Activated CD4-positive, alpha-beta T cell treated with anti-CD3 and anti-CD28 coated beads, Interleukin-2, amount 10 ng/mL, durations not matched to agents 24 days and 14 days (primary cell): ENCODE measurements at regions of chr20 and their contacts with region 1.

Region 1: DNA sequence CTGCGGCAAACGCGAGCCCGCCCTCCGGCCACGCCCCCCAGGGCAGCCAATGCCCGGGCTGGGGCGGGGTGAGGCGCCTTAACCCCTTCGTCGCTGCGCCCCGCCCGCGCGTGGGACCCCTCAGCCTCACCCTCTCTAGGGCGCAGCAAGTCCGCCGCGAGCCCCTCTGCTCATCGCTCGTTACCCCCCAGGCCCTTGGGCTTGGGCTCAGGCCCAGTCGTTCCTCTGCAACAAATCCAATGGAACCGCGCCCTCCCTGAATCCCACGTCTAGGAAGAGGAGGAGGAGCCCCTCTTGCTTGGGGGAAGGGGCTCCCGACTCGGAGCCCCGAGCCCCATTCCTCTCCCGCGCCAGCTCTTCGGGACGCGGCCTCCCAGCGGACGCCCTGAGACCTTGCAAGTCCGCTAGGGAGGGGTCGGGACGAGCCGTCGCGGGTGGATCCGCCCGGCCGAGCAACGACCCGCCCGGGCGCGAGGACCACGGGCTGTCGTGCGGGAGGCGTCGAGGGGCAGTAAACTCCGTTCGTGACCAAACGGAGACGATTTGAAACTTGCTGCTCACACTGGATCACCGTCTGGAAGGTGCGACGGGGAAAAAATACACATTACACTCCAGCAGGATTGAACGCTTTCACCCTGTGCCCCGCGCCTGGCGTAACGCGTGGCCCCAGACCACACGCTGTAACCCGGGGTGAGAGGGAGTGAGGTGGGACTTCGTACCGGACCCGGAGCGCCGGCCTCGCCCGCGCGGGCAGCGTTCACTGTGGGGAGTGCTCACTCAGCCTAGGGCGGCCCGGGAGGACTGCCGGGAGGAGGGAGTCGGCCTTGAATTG is 477 bp upstream of the LZTS3 start:
- DNase-seq: peak; percentile 97
- H3K4me3 Mint-ChIP-seq: peak overlapping the region; percentile 87
- H3K27ac Mint-ChIP-seq: peak overlapping the region; percentile 62
- H3K4me1 Mint-ChIP-seq: peaks cover 6% of the 10 kb centered on the region
- H3K27me3 Mint-ChIP-seq: peaks cover 55% of the 10 kb centered on the region

Region 2: GRCh38 chr20:3239026-3239866 is 65.4 kb after region 1 on chr20 and contains the start of gene SLC4A11:
- intact Hi-C with region 1: loop called (anchors 2 kb)
- DNase-seq: peak; percentile 84
- H3K4me3 Mint-ChIP-seq: peak within 1 kb of the TSS; percentile 91
- H3K27ac Mint-ChIP-seq: no peak within 1 kb of the TSS
- H3K4me1 Mint-ChIP-seq: peaks cover 8% of the 10 kb centered on the region
- H3K27me3 Mint-ChIP-seq: peaks cover 52% of the 10 kb centered on the region
- total RNA-seq, gene SLC4A11: 1.9 and 2.4 TPM in 2 replicates